H1 (cell line): ENCODE measurements at regions of chr9 and their contacts with region 1.

Region 1: DNA sequence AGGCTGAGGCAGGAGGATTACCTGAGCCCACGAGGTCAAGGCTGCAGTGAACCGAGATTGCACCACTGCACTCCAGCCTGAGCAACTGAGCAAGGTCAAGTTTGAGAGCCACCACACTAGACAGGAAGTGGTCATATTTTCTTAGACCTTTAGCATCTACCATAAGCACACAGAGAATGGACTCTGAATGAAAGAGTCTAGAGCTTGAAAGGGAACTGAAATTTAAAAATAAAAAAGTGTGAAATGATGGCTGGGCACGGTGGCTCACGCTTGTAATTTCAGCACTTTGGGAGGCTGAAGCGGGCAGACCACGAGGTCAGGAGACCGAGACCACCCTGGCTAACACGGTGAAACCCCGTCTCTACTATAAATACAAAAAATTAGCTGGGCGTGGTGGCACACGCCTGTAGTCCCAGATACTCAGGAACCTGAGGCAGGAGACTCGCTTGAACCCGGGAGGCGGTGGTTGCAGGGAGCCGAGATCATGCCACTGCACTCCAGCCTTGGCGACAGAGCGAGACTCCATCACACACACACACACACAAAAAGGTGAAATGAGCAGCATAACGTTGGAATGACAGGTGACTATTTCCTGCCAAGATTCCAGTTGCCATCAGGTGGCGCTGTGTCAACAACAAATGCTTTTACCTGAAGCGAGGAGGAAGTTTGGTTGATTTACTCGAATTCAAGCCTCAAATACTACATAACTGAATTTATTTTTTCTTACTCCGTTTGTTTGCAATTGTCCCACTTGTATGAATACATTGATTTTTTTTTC is 21.3 kb upstream of the AK3 start:
- DNase-seq: peak; percentile 54 to 85
- H3K4me3 ChIP-seq: peak overlapping the region in 1 of 4 experiments; percentile 32; a peak in 1 of 8 replicates
- H3K27ac ChIP-seq: no peak overlapping the region
- H3K4me1 ChIP-seq: peaks cover 0 to 8% (median 5%) of the 10 kb centered on the region in 4 experiments; a peak in 4 of 7 replicates
- H3K27me3 ChIP-seq: no peaks in the 10 kb centered on the region
- CTCF ChIP-seq: peak; percentile 37 to 90 (median 78)
- EP300 ChIP-seq: no peak
- POLR2A ChIP-seq: no peak
- RAD21 ChIP-seq: peak; percentile 92 to 94

Region 2: DNA sequence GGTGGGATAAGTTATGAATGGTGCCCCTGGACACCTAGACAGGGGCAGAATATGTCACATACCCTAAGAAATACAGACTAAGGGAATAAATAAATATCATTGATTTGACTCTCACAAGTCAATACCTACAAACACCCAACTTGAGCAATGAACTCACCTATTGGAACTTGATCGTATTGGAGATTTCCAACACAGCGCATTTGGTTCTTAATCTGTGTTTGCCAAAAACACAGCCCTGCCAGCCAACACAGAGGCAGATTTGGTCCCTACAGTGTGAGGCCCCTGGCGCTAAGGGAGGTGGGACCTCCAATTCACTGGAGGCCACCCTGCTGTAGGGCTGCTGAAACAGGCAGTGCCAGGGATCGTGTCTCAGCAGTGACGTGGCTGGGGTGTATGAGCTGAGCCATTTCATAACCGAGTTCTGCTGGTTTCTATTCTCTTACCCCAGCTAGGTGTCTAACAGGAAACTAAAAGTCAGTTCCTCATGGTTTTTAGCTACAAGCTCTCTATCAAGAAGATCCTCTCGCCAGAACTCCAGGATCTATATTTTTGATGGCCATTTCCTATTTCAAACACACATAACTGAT is 187.5 kb before region 1 on chr9:
- CTCF ChIA-PET with region 1: no interaction called
- POLR2A ChIA-PET with region 1: no interaction called
- DNase-seq: no peak
- H3K4me3 ChIP-seq: no peak overlapping the region
- H3K27ac ChIP-seq: no peak overlapping the region; the same call in 1 of the 2 replicates
- H3K4me1 ChIP-seq: no peaks in the 10 kb centered on the region; a peak in 2 of 7 replicates
- H3K27me3 ChIP-seq: no peaks in the 10 kb centered on the region
- CTCF ChIP-seq: no peak
- EP300 ChIP-seq: no peak
- POLR2A ChIP-seq: no peak
- RAD21 ChIP-seq: no peak

Region 3: GRCh38 chr9:4740638-4741364 is 21.5 kb before region 1 on chr9 and contains the start of gene AK3:
- CTCF ChIA-PET with region 1: interaction called, 13 read pairs
- POLR2A ChIA-PET with region 1: no interaction called
- DNase-seq: peak; percentile 62 to 87
- H3K4me3 ChIP-seq: peak within 1 kb of the TSS; percentile 58 to 87 (median 76)
- H3K27ac ChIP-seq: no peak within 1 kb of the TSS
- H3K4me1 ChIP-seq: peaks cover 0 to 3% (median 0%) of the 10 kb centered on the region in 4 experiments; a peak in 4 of 7 replicates
- H3K27me3 ChIP-seq: no peaks in the 10 kb centered on the region
- CTCF ChIP-seq: peak in 2 of 3 experiments; percentile 24 to 25; a peak in 3 of 4 replicates
- EP300 ChIP-seq: no peak
- POLR2A ChIP-seq: peak; percentile 48 to 86
- RAD21 ChIP-seq: peak; percentile 24 to 46
- total RNA-seq, gene AK3: 23.9 and 30.0 TPM in 2 replicates

Region 4: GRCh38 chr9:4750023-4750673 is 12.1 kb before region 1 on chr9:
- CTCF ChIA-PET with region 1: interaction called, 18 read pairs
- POLR2A ChIA-PET with region 1: no interaction called
- DNase-seq: no peak
- H3K4me3 ChIP-seq: no peak overlapping the region
- H3K27ac ChIP-seq: no peak overlapping the region
- H3K4me1 ChIP-seq: no peaks in the 10 kb centered on the region
- H3K27me3 ChIP-seq: no peaks in the 10 kb centered on the region
- CTCF ChIP-seq: peak in 2 of 3 experiments; percentile 13 to 48; a peak in 2 of 4 replicates
- EP300 ChIP-seq: no peak
- POLR2A ChIP-seq: no peak
- RAD21 ChIP-seq: peak; percentile 50 to 52

Region 5: DNA sequence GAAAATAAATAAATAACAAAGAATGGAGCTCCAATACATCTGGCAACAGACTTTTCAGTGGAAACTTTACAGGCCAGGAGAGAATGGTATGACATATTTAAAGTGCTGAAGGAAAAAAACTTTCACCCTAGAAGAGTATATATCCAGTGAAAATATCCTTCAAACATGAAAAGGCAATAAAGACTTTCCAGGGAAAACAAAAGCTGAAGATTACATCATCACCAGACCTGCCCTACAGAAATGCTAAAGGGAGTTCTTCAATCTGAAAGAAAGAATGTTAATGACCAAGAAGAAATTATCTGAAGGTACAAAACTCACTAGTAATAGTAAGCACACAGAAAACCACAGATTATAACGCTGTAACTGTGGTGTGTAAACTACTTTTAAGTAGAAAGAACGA is 22.1 kb after region 1 on chr9:
- CTCF ChIA-PET with region 1: interaction called, 10 read pairs
- POLR2A ChIA-PET with region 1: no interaction called
- DNase-seq: no peak
- H3K4me3 ChIP-seq: no peak overlapping the region
- H3K27ac ChIP-seq: no peak overlapping the region
- H3K4me1 ChIP-seq: no peaks in the 10 kb centered on the region
- H3K27me3 ChIP-seq: no peaks in the 10 kb centered on the region
- CTCF ChIP-seq: no peak
- EP300 ChIP-seq: no peak
- POLR2A ChIP-seq: no peak
- RAD21 ChIP-seq: no peak

Region 6: DNA sequence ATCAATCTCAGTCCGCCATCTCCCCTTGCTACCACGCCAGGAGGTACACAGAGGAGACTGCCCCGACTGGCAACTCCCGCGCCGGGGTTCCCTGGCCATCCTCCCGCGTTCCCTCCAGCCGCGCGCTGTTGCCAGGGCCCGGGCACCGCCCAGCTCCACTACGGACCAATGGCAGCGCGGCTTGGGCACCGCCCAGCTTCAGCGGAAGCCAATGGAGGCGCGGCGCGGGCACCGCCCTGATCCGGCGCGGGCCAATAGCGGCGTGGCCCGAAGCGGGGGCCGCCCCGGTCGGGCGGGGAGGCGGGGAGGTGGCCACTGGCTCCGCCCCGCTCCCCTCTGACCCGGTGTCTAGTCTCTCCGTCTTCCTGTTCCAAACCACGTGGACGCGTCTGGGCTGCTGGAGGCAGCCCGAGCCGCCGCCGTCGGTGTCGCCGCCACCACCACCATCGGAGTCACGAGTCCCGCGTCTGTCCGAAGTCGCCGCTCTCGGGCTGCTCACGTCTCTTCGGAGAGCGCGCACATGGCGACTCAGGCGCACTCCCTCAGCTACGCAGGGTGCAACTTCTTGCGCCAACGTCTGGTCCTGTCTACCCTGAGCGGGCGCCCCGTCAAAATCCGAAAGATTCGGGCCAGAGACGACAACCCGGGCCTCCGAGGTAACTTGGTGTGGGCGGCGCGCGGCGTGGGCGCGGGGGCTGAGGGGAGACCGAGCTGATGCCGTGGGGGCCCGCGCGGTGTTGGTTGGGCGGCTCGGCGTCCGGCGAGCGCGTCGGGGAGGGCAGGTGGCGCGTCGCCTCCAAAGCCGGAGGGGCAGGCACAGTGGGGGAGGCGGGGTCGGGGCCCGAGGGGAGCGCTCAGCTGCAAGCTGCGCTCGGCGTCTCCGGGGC is 30.5 kb after region 1 on chr9 and contains the start of gene RCL1:
- CTCF ChIA-PET with region 1: interaction called, 20 read pairs
- POLR2A ChIA-PET with region 1: interaction called, 6 read pairs
- DNase-seq: peak; percentile 89 to 95
- H3K4me3 ChIP-seq: peak within 1 kb of the TSS; percentile 81 to 86 (median 84)
- H3K27ac ChIP-seq: peak within 1 kb of the TSS; percentile 76
- H3K4me1 ChIP-seq: peaks cover 0 to 13% (median 6%) of the 10 kb centered on the region in 4 experiments; a peak in 6 of 7 replicates
- H3K27me3 ChIP-seq: no peaks in the 10 kb centered on the region; a peak in 2 of 7 replicates
- CTCF ChIP-seq: no peak
- EP300 ChIP-seq: no peak; a peak in 1 of 3 replicates
- POLR2A ChIP-seq: peak; percentile 86 to 88
- RAD21 ChIP-seq: no peak
- total RNA-seq, gene RCL1: 29.5 and 29.7 TPM in 2 replicates

Region 7: DNA sequence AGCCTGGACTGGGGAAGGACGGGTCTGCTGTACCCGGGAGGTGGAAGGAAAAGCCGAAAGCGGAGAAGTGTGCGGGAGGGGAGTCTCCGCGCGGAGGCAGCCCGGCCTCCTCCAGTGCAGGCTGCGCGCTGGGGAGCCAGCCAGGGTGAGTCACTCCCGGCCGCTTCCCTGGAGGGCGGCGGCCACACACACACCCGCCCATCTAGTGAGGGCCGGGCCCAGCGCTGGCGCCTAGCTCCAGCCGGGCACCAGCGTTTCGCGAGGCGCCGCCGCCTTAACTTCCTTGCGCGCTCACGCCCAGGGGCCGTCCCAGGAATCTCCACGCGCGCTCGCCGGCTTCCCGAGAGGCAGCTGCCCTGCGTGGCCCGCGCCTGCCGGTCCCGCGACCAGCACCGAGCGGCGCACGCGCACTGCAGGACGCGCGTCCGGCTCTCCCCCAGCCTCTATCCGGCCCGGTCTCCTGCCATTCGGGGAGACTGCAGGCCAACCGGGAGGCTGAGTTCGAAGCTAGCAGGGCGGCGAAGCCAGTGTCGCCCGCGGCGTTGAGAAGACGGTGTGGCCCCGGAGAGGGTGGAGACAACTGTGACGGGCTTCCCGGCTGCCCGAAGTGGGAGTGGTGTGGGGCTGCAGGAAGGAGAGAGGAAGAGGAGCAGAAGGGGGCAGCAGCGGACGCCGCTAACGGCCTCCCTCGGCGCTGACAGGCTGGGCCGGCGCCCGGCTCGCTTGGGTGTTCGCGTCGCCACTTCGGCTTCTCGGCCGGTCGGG is 222.5 kb after region 1 on chr9 and contains the start of gene JAK2:
- CTCF ChIA-PET with region 1: interaction called, 76 read pairs
- POLR2A ChIA-PET with region 1: interaction called, 3 read pairs
- DNase-seq: peak; percentile 78 to 89
- H3K4me3 ChIP-seq: peak within 1 kb of the TSS; percentile 50 to 83 (median 68)
- H3K27ac ChIP-seq: peak within 1 kb of the TSS; percentile 44; the same call in 1 of the 2 replicates
- H3K4me1 ChIP-seq: peaks cover 0 to 3% (median 1%) of the 10 kb centered on the region in 4 experiments; a peak in 2 of 7 replicates
- H3K27me3 ChIP-seq: peaks cover 0 to 10% (median 4%) of the 10 kb centered on the region in 4 experiments; a peak in 3 of 7 replicates
- CTCF ChIP-seq: peak; percentile 43 to 61 (median 55)
- EP300 ChIP-seq: no peak
- POLR2A ChIP-seq: peak; percentile 43 to 70
- RAD21 ChIP-seq: peak; percentile 16 to 28; a peak in 2 of 4 replicates
- total RNA-seq, gene JAK2: 2.0 and 2.1 TPM in 2 replicates